CD4-positive, alpha-beta memory T cell (primary cell): ENCODE measurements at regions of chr17 and their contacts with region 1.

Region 1: GRCh38 chr17:59311130-59311920 is 20.1 kb upstream of the YPEL2 start:
- DNase-seq: peak; percentile 50 to 68 (median 63)
- H3K4me3 ChIP-seq: no peak overlapping the region
- H3K4me3 Mint-ChIP-seq: no peak overlapping the region
- H3K27ac ChIP-seq: no peak overlapping the region
- H3K27ac Mint-ChIP-seq: peak overlapping the region in 1 of 7 donors; percentile 23
- H3K4me1 ChIP-seq: no peaks in the 10 kb centered on the region
- H3K4me1 Mint-ChIP-seq: peaks cover 0 to 4% (median 4%) of the 10 kb centered on the region in 4 donors
- H3K27me3 ChIP-seq: no peaks in the 10 kb centered on the region
- H3K27me3 Mint-ChIP-seq: no peaks in the 10 kb centered on the region

Region 2: GRCh38 chr17:59220376-59221158 is 90.8 kb before region 1 on chr17 and contains the start of gene GDPD1:
- CTCF ChIA-PET with region 1: interaction called, 3 read pairs
- POLR2A ChIA-PET with region 1: interaction called, 3 read pairs
- intact Hi-C with region 1: loop called (anchors 1 kb)
- DNase-seq: peak; percentile 95 to 98 (median 96)
- H3K4me3 ChIP-seq: peak within 1 kb of the TSS; percentile 97 to 98
- H3K4me3 Mint-ChIP-seq: peak within 1 kb of the TSS; percentile 96 to 100 (median 98)
- H3K27ac ChIP-seq: peak within 1 kb of the TSS; percentile 92
- H3K27ac Mint-ChIP-seq: peak within 1 kb of the TSS; percentile 96 to 100 (median 99)
- H3K4me1 ChIP-seq: peaks cover 7% of the 10 kb centered on the region
- H3K4me1 Mint-ChIP-seq: peaks cover 7 to 15% (median 12%) of the 10 kb centered on the region in 4 donors
- H3K27me3 ChIP-seq: no peaks in the 10 kb centered on the region
- H3K27me3 Mint-ChIP-seq: no peaks in the 10 kb centered on the region
- total RNA-seq, gene GDPD1: 4.5 to 5.3 TPM

Region 3: DNA sequence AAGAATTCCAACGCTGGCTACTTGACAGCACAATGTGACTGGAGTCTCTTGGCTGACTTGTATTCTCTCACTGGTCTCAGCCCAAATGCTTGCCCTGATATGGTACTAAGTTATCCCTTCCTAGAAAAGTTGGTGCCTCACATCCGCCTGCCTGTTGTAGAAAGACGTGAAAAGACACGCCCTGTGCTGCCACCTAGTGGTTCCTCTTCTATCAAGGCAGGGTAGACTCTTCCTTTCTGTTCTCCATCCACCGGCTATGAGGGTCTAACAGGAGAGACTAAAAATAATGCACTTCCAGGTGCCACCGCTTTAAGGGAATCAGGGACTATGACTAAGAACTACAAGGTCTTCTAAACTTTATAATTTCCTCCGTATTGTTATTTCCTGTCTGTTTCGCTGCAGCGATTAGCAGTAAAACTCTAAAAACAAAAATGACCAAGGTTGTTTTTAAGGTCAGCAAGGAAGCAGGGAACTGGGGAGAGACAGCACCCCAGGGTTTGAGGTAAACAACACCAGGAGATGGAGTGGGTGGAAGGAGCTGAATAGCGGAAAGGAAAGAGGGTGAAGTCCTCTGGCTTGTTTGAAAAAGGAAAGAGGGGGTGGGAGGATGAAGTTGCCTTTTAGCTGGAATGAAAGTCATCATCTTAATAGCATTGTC is 129.6 kb after region 1 on chr17:
- CTCF ChIA-PET with region 1: interaction called, 500 read pairs
- POLR2A ChIA-PET with region 1: interaction called, 21 read pairs
- intact Hi-C with region 1: loop called (anchors 1 kb)
- DNase-seq: peak; percentile 78 to 83 (median 79)
- H3K4me3 ChIP-seq: no peak overlapping the region
- H3K4me3 Mint-ChIP-seq: peak overlapping the region; percentile 3 to 70 (median 19)
- H3K27ac ChIP-seq: no peak overlapping the region
- H3K27ac Mint-ChIP-seq: peak overlapping the region in 2 of 7 donors; percentile 25 to 46
- H3K4me1 ChIP-seq: peaks cover 20% of the 10 kb centered on the region
- H3K4me1 Mint-ChIP-seq: peaks cover 8 to 23% (median 17%) of the 10 kb centered on the region in 4 donors
- H3K27me3 ChIP-seq: no peaks in the 10 kb centered on the region
- H3K27me3 Mint-ChIP-seq: peaks cover 2 to 4% of the 10 kb centered on the region in 2 donors

Region 4: DNA sequence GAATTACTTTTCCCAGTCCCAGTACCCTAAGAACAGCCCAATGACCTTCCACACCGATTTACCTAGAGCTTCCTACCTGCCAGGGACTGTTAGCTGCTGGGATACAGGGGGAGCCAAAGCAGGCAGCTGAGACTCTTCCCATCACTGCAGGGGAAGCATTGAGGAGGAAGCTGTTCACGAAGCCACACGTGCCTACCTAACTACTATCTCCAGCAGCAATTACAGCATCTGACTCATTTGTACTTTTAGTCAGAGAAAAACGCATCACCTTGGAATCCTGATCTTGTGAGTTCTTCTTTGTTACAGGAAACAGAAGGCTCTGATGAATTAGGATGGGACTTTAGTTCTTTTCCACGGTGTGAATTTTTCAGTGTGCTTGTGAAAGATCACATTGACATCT is 140.4 kb after region 1 on chr17:
- CTCF ChIA-PET with region 1: interaction called, 12 read pairs
- POLR2A ChIA-PET with region 1: no interaction called
- intact Hi-C with region 1: no loop called
- DNase-seq: no peak
- H3K4me3 ChIP-seq: no peak overlapping the region
- H3K4me3 Mint-ChIP-seq: no peak overlapping the region
- H3K27ac ChIP-seq: no peak overlapping the region
- H3K27ac Mint-ChIP-seq: no peak overlapping the region
- H3K4me1 ChIP-seq: no peaks in the 10 kb centered on the region
- H3K4me1 Mint-ChIP-seq: no peaks in the 10 kb centered on the region
- H3K27me3 ChIP-seq: no peaks in the 10 kb centered on the region
- H3K27me3 Mint-ChIP-seq: peaks cover 0 to 5% of the 10 kb centered on the region in 2 donors

Region 5: DNA sequence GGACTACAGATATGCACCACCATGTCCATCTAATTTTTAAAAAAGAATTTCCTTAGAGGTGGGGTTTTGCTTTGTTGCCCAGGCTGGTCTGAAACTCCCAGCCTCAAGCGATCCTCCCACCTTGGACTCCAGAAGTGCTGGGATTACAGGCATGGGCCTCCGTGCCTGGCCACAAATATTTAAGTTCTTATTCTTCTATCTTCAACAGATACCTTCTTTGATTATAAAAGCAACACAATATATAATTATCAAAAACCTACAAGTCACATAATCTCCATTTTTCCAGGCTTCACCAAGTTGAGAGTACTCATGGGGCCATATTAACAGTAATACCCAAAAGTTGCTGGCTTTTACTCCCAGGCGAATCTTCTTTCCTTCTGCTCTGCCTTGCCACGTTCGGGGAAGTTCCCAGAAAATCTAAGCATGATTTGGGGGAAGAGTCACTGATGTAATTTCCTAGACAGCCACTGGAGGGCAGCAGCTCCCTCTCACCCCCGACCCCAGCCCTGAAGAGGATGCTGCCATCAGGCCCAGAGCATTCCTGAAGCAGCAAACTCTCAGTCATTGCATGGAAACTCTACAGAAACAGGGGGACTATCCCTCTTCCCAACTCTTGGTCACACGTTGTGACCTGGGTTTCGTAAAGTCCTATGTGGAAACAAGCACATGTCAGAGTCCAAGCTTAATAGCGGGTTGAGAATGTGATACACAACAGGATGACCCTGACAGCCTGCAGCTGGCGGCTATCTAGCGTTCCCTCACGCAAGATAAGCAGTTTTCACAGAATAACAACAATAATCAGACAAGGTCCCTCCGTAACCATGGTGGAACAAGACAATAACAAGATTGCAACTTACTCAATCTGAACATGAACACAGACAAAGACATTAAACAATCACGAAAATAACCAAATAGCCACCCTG is 210.1 kb after region 1 on chr17:
- CTCF ChIA-PET with region 1: interaction called, 6 read pairs
- POLR2A ChIA-PET with region 1: no interaction called
- intact Hi-C with region 1: loop called (anchors 1 kb)
- DNase-seq: peak; percentile 40 to 51 (median 46)
- H3K4me3 ChIP-seq: no peak overlapping the region
- H3K4me3 Mint-ChIP-seq: no peak overlapping the region
- H3K27ac ChIP-seq: no peak overlapping the region
- H3K27ac Mint-ChIP-seq: no peak overlapping the region
- H3K4me1 ChIP-seq: no peaks in the 10 kb centered on the region
- H3K4me1 Mint-ChIP-seq: peaks cover 0 to 6% (median 1%) of the 10 kb centered on the region in 4 donors
- H3K27me3 ChIP-seq: no peaks in the 10 kb centered on the region
- H3K27me3 Mint-ChIP-seq: peaks cover 8 to 14% of the 10 kb centered on the region in 2 donors

Region 6: GRCh38 chr17:60036796-60037612 is 725.7 kb after region 1 on chr17:
- CTCF ChIA-PET with region 1: interaction called, 3 read pairs
- POLR2A ChIA-PET with region 1: no interaction called
- intact Hi-C with region 1: loop called (anchors 10 kb)
- DNase-seq: peak; percentile 63 to 69 (median 67)
- H3K4me3 ChIP-seq: no peak overlapping the region
- H3K4me3 Mint-ChIP-seq: no peak overlapping the region
- H3K27ac ChIP-seq: no peak overlapping the region
- H3K27ac Mint-ChIP-seq: peak overlapping the region in 2 of 7 donors; percentile 13 to 53
- H3K4me1 ChIP-seq: no peaks in the 10 kb centered on the region
- H3K4me1 Mint-ChIP-seq: peaks cover 5% of the 10 kb centered on the region in 4 donors
- H3K27me3 ChIP-seq: peaks cover 4% of the 10 kb centered on the region
- H3K27me3 Mint-ChIP-seq: peaks cover 10 to 12% of the 10 kb centered on the region in 2 donors